ENCODE measurements at regions of chr7 and their contacts with region 1.

Region 1: DNA sequence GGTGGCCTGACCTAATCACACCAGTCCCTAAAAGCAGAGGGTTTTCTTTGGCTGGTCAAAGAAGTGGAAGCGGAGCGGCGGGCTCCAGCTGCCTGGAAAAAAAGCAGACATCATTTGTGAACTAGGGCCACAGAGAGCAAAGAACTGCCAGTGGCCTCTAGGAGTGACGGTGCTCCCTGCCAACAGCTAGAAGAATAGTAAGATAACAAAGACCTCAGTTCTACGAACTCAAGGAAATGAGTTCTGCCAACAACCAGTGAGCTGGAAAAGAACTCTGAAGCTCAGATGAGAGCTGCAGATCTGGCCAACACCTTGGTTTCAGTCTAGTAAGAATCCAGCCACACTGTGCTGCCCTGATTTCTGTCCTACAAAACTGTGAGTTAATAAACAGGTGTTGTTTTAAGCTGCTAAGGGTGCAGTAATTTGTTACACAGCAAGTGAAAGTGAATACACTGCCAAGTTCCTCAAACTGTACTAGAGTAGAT is 178.0 kb downstream of the SRPK2 start:
- DNase-seq: peak; percentile 29 to 51
- ATAC-seq: peak; percentile 78 to 90 (median 88)
- H3K4me3 ChIP-seq: peak overlapping the region in 2 of 10 donors; percentile 4 to 18
- H3K27ac ChIP-seq: peak overlapping the region in 6 of 10 donors; percentile 5 to 61 (median 39)
- H3K4me1 ChIP-seq: peaks cover 5 to 52% (median 15%) of the 10 kb centered on the region in 9 donors
- H3K27me3 ChIP-seq: no peaks in the 10 kb centered on the region
- CTCF ChIP-seq: peak in 2 of 9 donors; percentile 13 to 16

Region 2: GRCh38 chr7:105149827-105150226 is 60.9 kb before region 1 on chr7:
- intact Hi-C with region 1: no loop called
- DNase-seq: no peak
- ATAC-seq: no peak
- H3K4me3 ChIP-seq: no peak overlapping the region
- H3K27ac ChIP-seq: no peak overlapping the region
- H3K4me1 ChIP-seq: peaks cover 0 to 25% (median 17%) of the 10 kb centered on the region in 9 donors
- H3K27me3 ChIP-seq: no peaks in the 10 kb centered on the region
- CTCF ChIP-seq: no peak

Region 3: DNA sequence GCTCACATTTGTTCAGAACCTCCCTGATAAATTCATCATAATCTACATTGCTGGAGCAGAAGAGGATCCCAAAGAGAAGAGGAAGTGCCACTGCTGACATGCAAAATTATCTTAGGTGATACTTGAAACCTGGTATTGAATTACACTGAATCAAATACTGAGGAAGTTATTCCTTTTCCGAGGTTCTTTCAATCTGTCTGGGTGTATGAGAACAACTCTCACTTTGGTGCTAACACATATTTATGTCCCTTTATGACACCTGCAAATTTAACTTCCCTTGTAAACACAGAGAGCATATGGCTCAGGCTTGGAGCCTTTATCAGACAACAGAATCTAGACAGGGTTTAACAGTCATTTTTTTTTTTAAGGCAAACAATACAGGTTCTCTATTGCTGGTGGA is 46.6 kb after region 1 on chr7:
- intact Hi-C with region 1: loop called in 1 of 10 experiments (anchors 1 kb)
- DNase-seq: no peak
- ATAC-seq: peak in 1 of 8 donors; percentile 16
- H3K4me3 ChIP-seq: no peak overlapping the region
- H3K27ac ChIP-seq: no peak overlapping the region
- H3K4me1 ChIP-seq: peaks cover 0 to 35% (median 21%) of the 10 kb centered on the region in 9 donors
- H3K27me3 ChIP-seq: no peaks in the 10 kb centered on the region
- CTCF ChIP-seq: no peak

Measured in heart right ventricle (tissue), 16 donors.